Activated CD4-positive, alpha-beta T cell treated with anti-CD3 and anti-CD28 coated beads, Interleukin-2, amount 10 ng/mL, durations not matched to agents 24 days and 14 days (primary cell): ENCODE measurements at regions of chr14 and their contacts with region 1.

Region 1: GRCh38 chr14:68862954-68863594 is 70.2 kb upstream of the ZFP36L1 start:
- DNase-seq: peak; percentile 90
- H3K4me3 Mint-ChIP-seq: no peak overlapping the region
- H3K27ac Mint-ChIP-seq: no peak overlapping the region
- H3K4me1 Mint-ChIP-seq: no peaks in the 10 kb centered on the region
- H3K27me3 Mint-ChIP-seq: no peaks in the 10 kb centered on the region

Region 2: GRCh38 chr14:69090187-69090789 is 227.2 kb after region 1 on chr14:
- intact Hi-C with region 1: loop called (anchors 5 kb)
- DNase-seq: peak; percentile 75
- H3K4me3 Mint-ChIP-seq: no peak overlapping the region
- H3K27ac Mint-ChIP-seq: no peak overlapping the region
- H3K4me1 Mint-ChIP-seq: peaks cover 6% of the 10 kb centered on the region
- H3K27me3 Mint-ChIP-seq: no peaks in the 10 kb centered on the region

Region 3: GRCh38 chr14:69107407-69108003 is 244.4 kb after region 1 on chr14:
- intact Hi-C with region 1: loop called (anchors 1 kb)
- DNase-seq: peak; percentile 79
- H3K4me3 Mint-ChIP-seq: no peak overlapping the region
- H3K27ac Mint-ChIP-seq: no peak overlapping the region
- H3K4me1 Mint-ChIP-seq: no peaks in the 10 kb centered on the region
- H3K27me3 Mint-ChIP-seq: no peaks in the 10 kb centered on the region